Ovary (tissue), 10 donors: ENCODE measurements at regions of chr5 and their contacts with region 1.

Region 1: DNA sequence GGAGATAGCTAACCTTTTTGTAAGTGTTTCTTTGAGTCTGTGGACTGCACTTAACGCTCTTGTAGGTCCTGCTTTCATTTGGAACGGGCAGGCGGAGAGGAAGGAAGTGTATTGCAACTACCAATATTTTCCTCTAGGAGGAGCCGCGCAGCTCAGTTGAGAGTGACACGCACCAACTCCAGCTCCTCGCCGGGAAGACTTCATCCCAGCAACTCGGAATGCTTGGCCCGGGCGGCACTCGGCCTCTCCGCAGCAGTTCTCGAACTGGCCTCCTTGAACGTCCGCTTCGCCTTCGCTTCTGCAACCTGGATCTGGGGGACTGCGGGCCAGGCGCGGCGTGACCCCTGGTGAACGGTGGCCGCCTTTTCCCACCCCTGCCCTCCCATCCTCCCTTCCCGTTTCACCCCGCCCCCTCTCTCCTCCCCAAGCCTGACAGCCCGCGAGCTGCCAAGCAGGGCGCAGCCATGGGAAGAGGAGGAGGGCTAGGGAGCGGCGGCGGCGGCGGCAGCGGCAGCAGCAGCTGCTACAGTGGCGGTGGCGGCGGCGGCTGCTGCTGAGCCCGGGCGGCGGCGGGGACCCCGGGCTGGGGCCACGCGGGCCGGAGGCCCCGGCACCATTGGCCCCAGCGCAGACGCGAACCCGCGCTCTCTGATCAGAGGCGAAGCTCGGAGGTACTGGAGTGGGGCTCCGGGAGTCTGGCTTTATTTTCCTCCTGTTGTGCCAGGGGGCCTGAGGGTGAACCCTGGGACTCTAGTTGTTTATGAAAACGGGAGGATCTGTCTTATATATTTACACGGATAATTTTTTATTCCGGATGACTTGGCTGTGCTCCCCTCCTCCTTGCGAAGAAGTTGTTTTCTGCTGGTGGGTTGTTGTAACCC is at the start of gene GHR:
- DNase-seq: peak; percentile 78 to 85 (median 82)
- H3K4me3 ChIP-seq: peak within 1 kb of the TSS; percentile 47
- H3K27ac ChIP-seq: peak within 1 kb of the TSS; percentile 33 to 81
- H3K4me1 ChIP-seq: peaks cover 2% of the 10 kb centered on the region
- H3K27me3 ChIP-seq: no peaks in the 10 kb centered on the region
- CTCF ChIP-seq: peak; percentile 67 to 77 (median 75)
- EP300 ChIP-seq: no peak
- POLR2A ChIP-seq: no peak
- total RNA-seq, gene GHR: 4.3 to 10.8 (median 7.0) TPM

Region 2: DNA sequence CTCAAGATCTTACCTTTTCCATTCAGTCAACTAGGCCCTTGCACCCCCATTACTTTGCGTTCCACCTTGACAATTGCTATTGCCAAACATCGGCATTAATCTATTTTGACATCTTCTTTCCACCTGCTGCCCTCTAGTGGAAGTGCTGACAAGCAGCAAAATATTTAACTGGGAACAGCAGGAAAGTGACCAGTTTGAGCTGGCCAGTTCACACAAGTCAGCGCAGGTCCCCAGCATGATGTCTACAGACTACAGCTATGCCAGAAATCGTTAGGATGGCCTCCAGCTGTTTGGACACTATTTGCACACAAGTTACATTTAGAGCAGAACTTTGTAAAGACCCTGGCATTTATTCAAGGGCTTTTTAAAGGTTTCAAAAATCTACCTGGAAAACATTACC is 159.8 kb after region 1 on chr5:
- intact Hi-C with region 1: loop called in 1 of 4 experiments (anchors 5 kb)
- DNase-seq: peak in 2 of 5 donors; percentile 33 to 50
- H3K4me3 ChIP-seq: no peak overlapping the region
- H3K27ac ChIP-seq: no peak overlapping the region
- H3K4me1 ChIP-seq: peaks cover 11% of the 10 kb centered on the region
- H3K27me3 ChIP-seq: no peaks in the 10 kb centered on the region
- CTCF ChIP-seq: peak in 2 of 3 donors; percentile 40 to 45
- EP300 ChIP-seq: no peak
- POLR2A ChIP-seq: no peak

Region 3: GRCh38 chr5:42636425-42636824 is 212.9 kb after region 1 on chr5:
- intact Hi-C with region 1: loop called in 1 of 4 experiments (anchors 10 kb)
- DNase-seq: no peak
- H3K4me3 ChIP-seq: no peak overlapping the region
- H3K27ac ChIP-seq: no peak overlapping the region
- H3K4me1 ChIP-seq: no peaks in the 10 kb centered on the region
- H3K27me3 ChIP-seq: no peaks in the 10 kb centered on the region
- CTCF ChIP-seq: no peak
- EP300 ChIP-seq: no peak
- POLR2A ChIP-seq: no peak

Region 4: DNA sequence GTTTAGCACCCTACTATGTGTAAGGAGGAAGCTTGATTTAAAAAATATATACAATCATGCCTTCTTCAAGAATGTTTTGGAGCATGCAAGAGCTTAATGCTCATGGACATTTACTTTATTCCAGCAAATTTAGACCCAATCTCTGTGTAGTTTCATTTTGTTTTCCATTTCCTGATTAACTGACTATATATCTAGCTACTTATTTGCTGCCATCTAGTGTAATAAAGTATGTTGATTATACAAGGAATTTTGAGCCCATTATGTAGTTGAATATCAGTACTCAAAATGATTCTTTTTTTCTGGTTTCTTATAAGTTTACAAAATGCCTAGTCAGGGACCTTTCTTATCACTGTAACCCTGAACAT is 233.1 kb after region 1 on chr5:
- intact Hi-C with region 1: loop called in 1 of 4 experiments (anchors 10 kb)
- DNase-seq: no peak
- H3K4me3 ChIP-seq: no peak overlapping the region
- H3K27ac ChIP-seq: no peak overlapping the region
- H3K4me1 ChIP-seq: no peaks in the 10 kb centered on the region
- H3K27me3 ChIP-seq: no peaks in the 10 kb centered on the region
- CTCF ChIP-seq: peak in 1 of 3 donors; percentile 25
- EP300 ChIP-seq: no peak
- POLR2A ChIP-seq: no peak

Region 5: GRCh38 chr5:42889311-42889933 is 465.9 kb after region 1 on chr5:
- intact Hi-C with region 1: loop called in 1 of 4 experiments (anchors 10 kb)
- DNase-seq: peak; percentile 69 to 85 (median 77)
- H3K4me3 ChIP-seq: no peak overlapping the region
- H3K27ac ChIP-seq: no peak overlapping the region
- H3K4me1 ChIP-seq: no peaks in the 10 kb centered on the region
- H3K27me3 ChIP-seq: no peaks in the 10 kb centered on the region
- CTCF ChIP-seq: peak; percentile 73 to 87 (median 74)
- EP300 ChIP-seq: no peak
- POLR2A ChIP-seq: no peak